ENCODE measurements at regions of chr17 and their contacts with region 1.

Region 1: GRCh38 chr17:48878918-48879898 is 13.4 kb upstream of the ATP5MC1 start:
- DNase-seq: no peak
- H3K4me3 ChIP-seq: no peak overlapping the region
- H3K27ac ChIP-seq: no peak overlapping the region
- H3K4me1 ChIP-seq: no peaks in the 10 kb centered on the region
- H3K27me3 ChIP-seq: peaks cover 0 to 37% (median 0%) of the 10 kb centered on the region in 4 donors
- CTCF ChIP-seq: peak; percentile 90 to 97 (median 95)
- EP300 ChIP-seq: no peak
- POLR2A ChIP-seq: no peak

Region 2: DNA sequence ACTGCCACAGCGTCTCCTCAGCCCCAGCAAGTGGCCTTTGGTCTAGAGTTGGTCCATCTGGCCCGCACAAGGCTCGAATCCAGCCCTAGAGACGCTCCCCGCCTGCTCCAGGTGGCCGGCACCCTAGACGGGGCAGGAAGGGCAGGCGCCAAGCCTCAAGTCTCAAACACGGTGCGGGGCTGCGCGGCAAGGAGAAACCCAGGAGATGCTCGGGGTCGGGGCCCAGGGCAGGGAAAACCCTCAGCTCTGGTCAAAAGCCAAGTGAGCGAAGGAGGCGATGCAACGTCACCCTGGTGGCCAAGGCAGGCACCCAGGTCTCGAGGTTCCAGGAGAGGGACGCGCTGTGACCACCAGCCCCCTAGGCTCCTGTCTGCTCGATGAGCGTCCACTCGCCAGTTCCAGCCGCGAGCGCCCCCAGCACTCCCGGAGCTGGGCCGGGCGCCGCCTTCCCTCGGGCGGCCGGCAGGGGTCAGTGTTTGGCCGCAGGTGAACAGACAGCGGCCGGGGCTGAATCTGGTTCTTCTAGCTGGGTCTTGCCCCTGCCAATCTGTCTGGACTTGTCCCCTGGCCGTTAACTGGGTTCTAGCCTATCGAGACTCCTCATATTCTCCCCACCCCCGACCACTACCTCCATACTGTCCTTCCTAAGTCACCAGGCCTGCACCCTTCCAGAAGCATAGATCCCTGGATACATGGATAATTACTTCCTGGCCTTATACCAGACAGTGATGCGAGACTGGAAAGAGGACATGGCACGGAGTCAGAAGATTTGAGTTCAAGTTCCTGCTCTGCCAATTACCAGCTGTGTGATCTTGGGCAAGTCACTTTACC is 200.9 kb before region 1 on chr17:
- intact Hi-C with region 1: loop called (anchors 5 kb)
- DNase-seq: no peak
- H3K4me3 ChIP-seq: peak overlapping the region in 1 of 4 donors; percentile 21
- H3K27ac ChIP-seq: no peak overlapping the region
- H3K4me1 ChIP-seq: peaks cover 0 to 9% (median 8%) of the 10 kb centered on the region in 4 donors
- H3K27me3 ChIP-seq: peaks cover 0 to 72% (median 9%) of the 10 kb centered on the region in 4 donors
- CTCF ChIP-seq: peak; percentile 83 to 95 (median 93)
- EP300 ChIP-seq: no peak
- POLR2A ChIP-seq: no peak

Region 3: GRCh38 chr17:48724251-48725003 is 154.8 kb before region 1 on chr17:
- intact Hi-C with region 1: loop called (anchors 5 kb)
- DNase-seq: peak; percentile 96
- H3K4me3 ChIP-seq: peak overlapping the region in 2 of 4 donors; percentile 16 to 28
- H3K27ac ChIP-seq: no peak overlapping the region
- H3K4me1 ChIP-seq: peaks cover 23 to 62% (median 46%) of the 10 kb centered on the region in 4 donors
- H3K27me3 ChIP-seq: peaks cover 11 to 100% (median 100%) of the 10 kb centered on the region in 4 donors
- CTCF ChIP-seq: peak; percentile 70 to 81 (median 72)
- EP300 ChIP-seq: no peak
- POLR2A ChIP-seq: no peak

Region 4: DNA sequence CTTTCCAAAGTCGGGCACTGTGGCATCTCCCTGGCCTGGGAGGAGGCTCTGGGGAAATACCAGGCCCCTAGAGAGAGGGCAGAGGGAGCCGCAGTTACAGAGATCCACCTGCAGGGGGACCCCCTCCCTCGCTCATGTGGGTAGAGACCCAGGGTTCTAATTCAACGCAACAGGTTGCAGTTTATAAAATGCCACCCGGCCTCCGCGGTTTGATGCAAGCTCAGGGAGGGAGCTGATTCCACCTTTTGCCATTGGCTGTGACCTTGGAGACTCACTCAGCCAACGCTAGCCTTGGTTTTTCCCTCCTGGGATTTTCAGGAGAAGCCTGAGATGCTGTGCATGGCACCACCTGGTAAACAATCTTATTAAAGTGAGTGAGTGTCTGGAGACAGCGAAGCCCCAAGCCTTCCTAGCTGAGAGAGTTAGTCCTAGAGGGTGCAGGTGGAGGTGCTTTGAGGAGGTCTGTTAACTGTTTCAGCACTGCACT is 74.2 kb before region 1 on chr17:
- intact Hi-C with region 1: loop called (anchors 2 kb)
- DNase-seq: no peak
- H3K4me3 ChIP-seq: no peak overlapping the region
- H3K27ac ChIP-seq: no peak overlapping the region
- H3K4me1 ChIP-seq: peaks cover 3 to 29% (median 24%) of the 10 kb centered on the region in 4 donors
- H3K27me3 ChIP-seq: peaks cover 0 to 4% (median 0%) of the 10 kb centered on the region in 4 donors
- CTCF ChIP-seq: peak; percentile 90 to 96 (median 95)
- EP300 ChIP-seq: no peak
- POLR2A ChIP-seq: no peak

Region 5: DNA sequence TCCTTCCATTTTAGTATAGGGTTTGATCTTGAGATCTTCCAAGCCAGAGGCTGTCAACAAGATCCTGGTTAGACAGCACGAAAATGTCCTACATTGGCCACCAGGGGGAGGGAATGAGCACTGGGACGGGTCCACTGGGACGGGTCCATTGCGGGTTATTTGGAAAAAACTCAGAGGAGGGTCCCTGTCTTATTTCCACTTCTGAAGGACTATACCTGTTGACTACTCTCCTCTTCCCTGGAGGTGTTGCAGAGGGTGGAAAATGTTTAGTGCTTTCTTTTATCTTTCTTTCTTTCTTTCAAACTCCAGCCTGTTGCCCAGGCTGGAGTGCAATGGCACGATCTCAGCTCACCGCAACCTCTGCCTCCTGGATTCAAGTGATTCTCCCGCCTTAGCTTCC is 64.7 kb before region 1 on chr17:
- intact Hi-C with region 1: loop called (anchors 2 kb)
- DNase-seq: no peak
- H3K4me3 ChIP-seq: no peak overlapping the region
- H3K27ac ChIP-seq: no peak overlapping the region
- H3K4me1 ChIP-seq: peaks cover 12 to 21% (median 18%) of the 10 kb centered on the region in 4 donors
- H3K27me3 ChIP-seq: peaks cover 0 to 44% (median 9%) of the 10 kb centered on the region in 4 donors
- CTCF ChIP-seq: peak; percentile 52 to 73 (median 54)
- EP300 ChIP-seq: no peak
- POLR2A ChIP-seq: no peak